Right ventricle myocardium inferior (tissue), 1 donor: ENCODE measurements at regions of chr12 and their contacts with region 1.

Region 1: DNA sequence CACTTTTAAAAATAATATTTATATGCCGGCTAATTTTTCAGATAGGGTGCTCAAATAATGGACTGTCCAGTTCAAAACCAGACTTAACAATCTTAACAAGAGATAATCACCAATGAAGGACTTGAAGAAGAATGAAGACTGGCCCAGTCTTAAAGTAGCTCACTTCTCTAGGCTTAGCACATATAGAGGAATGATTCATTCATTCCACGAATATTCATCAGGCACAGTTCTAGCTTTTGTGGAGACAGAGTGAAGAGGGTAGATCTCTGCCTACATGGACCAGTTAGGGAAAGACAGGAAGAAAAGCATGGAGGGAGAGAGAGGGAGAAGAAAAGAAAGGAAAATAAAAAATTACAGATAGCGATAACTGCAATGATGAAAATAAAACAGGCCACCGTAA is 42.8 kb upstream of the METAP2 start:
- DNase-seq: no peak
- ATAC-seq: no peak

Region 2: GRCh38 chr12:94525951-94526350 is 905.2 kb before region 1 on chr12:
- intact Hi-C with region 1: loop called (anchors 5 kb)
- DNase-seq: no peak
- ATAC-seq: no peak

Region 3: DNA sequence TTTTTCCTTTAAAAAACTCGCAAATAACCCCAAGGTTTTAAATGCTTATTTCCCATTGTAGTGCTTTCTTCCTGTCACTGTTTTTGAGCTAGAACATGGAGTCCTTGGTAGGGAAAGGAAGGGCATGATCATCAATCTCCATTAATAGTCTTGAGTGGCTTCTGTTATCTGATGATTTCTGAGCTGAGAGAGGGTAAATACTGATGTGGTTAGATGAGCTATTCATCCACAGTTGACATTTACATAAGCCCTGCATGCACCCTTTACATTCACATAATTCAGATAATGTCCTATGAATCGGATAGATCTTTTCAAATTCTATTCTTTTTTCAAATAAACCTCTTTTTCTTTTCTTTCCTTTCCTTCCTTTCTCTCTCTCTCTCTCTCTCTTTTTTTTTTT is 278.0 kb after region 1 on chr12:
- intact Hi-C with region 1: no loop called
- DNase-seq: no peak
- ATAC-seq: no peak